Endothelial cell of umbilical vein (primary cell): ENCODE measurements at regions of chr17 and their contacts with region 1.

Region 1: DNA sequence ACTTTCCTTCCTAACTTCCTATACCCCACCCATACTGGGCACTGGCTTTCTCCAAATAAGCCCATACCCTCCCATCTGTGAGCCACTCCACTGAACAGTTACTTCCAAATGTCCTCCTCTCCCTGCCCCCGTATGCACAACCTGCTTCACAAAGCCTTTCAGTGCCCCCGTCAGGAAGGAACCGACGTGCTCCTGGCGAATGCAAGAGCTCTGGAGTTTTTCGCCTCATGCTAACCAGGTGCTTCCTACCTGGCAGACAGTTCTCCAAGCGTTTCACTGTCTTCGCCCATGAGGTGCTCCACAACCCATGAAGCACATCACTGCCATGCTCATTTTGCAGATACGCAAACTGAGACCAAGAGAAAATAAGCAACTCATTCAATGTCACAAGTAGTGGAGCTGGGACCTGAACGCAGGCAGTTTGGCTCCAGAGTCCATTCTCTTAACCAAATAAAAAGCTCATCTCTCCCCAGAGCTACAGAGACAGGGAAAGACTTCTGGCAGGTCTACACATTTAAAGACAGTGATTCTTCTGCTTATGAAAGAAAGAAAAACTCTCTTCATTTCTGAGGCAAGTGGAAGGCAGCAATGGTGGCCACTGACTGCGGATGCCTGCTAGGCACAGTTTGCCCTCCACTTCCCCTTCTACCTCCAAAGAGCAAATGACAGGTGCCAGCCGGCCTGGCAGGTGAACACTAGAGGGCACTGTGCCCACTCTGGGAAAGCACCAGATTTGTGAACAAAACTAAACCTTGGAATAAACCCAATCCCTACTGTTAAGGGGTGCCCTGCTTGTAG is 23.8 kb downstream of the SPHK1 start:
- DNase-seq: peak; percentile 66
- H3K4me3 ChIP-seq: no peak overlapping the region
- H3K27ac ChIP-seq: no peak overlapping the region
- H3K4me1 ChIP-seq: no peaks in the 10 kb centered on the region
- H3K27me3 ChIP-seq: no peaks in the 10 kb centered on the region
- CTCF ChIP-seq: peak; percentile 92
- POLR2A ChIP-seq: no peak

Region 2: DNA sequence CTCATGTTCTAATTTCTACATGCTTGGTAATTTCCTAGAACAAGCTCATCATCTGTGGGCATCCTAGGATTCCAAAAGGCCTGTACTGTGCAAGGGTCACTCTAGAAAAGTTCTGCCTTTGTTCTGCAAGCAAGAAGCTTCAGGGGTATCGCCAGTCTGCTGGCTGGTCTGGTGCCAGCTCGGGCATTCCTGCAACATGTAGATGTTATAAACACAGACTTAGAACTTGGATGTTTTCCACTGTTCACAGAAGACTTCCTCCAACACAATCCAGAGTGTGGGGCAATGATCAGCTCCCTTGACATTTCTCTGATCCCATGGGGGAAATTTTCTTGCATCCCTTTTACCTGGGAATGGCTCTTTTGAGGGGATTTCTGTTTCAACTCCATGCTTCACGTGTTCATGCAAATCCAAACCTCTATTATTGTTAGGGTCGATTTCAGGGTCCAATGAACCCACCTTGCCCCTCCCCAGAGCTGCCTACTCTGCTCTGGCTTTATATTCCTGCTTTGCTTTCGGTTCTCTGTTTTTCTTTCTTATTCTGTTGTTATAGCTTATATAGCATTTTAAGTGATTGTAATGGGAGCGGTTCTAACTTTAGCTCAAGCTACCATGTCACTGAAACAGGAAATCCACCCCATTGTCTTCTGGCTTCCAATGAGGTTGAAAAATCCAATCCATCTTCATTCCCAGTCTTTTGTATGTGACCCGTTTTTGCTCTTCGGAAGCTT is 19.4 kb after region 1 on chr17:
- CTCF ChIA-PET with region 1: interaction called, 15 read pairs
- POLR2A ChIA-PET with region 1: interaction called, 3 read pairs
- dilution Hi-C with region 1: no loop called
- intact Hi-C with region 1: no loop called
- DNase-seq: peak; percentile 84
- H3K4me3 ChIP-seq: peak overlapping the region in 1 of 3 experiments; percentile 28
- H3K27ac ChIP-seq: peak overlapping the region; percentile 45
- H3K4me1 ChIP-seq: peaks cover 22% of the 10 kb centered on the region
- H3K27me3 ChIP-seq: no peaks in the 10 kb centered on the region
- CTCF ChIP-seq: no peak
- POLR2A ChIP-seq: no peak

Region 3: GRCh38 chr17:76446449-76447231 is 38.4 kb after region 1 on chr17:
- CTCF ChIA-PET with region 1: interaction called, 319 read pairs
- POLR2A ChIA-PET with region 1: no interaction called
- dilution Hi-C with region 1: no loop called
- intact Hi-C with region 1: no loop called
- DNase-seq: peak; percentile 28
- H3K4me3 ChIP-seq: no peak overlapping the region
- H3K27ac ChIP-seq: no peak overlapping the region
- H3K4me1 ChIP-seq: peaks cover 47% of the 10 kb centered on the region
- H3K27me3 ChIP-seq: no peaks in the 10 kb centered on the region
- CTCF ChIP-seq: no peak
- POLR2A ChIP-seq: no peak

Region 4: GRCh38 chr17:76452660-76453430 is 44.6 kb after region 1 on chr17 and contains the start of gene UBE2O:
- CTCF ChIA-PET with region 1: interaction called, 319 read pairs
- POLR2A ChIA-PET with region 1: no interaction called
- dilution Hi-C with region 1: no loop called
- intact Hi-C with region 1: loop called (anchors 1 kb)
- DNase-seq: peak; percentile 84
- H3K4me3 ChIP-seq: peak within 1 kb of the TSS; percentile 66 to 96 (median 73)
- H3K27ac ChIP-seq: peak within 1 kb of the TSS; percentile 31
- H3K4me1 ChIP-seq: peaks cover 10% of the 10 kb centered on the region
- H3K27me3 ChIP-seq: no peaks in the 10 kb centered on the region
- CTCF ChIP-seq: peak; percentile 38 to 44
- POLR2A ChIP-seq: peak; percentile 35
- total RNA-seq, gene UBE2O: 32.8 and 34.1 TPM in 2 replicates

Region 5: DNA sequence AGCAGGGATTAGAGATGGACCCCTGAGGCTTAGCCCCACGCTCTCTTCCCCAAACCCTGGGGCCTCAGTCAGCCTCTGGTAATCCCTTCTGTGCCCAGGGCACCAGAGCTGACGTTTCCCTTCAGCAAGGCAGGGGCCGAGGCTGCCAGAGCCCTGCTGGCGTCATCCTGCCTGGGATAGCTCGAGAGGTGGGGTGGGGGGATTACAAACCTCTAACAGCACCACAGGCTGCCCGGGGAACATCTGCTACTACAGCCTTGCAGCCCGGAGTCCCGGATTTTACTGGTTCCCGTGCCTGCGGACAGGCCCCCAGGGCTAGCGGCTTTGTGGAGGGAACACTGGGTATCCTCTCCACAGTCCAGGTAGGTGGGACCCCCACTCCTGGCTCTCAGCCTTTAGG is 59.1 kb after region 1 on chr17 and contains the start of gene AANAT:
- CTCF ChIA-PET with region 1: interaction called, 12 read pairs
- POLR2A ChIA-PET with region 1: no interaction called
- dilution Hi-C with region 1: no loop called
- intact Hi-C with region 1: loop called (anchors 2 kb)
- DNase-seq: no peak
- H3K4me3 ChIP-seq: no peak within 1 kb of the TSS
- H3K27ac ChIP-seq: no peak within 1 kb of the TSS
- H3K4me1 ChIP-seq: no peaks in the 10 kb centered on the region
- H3K27me3 ChIP-seq: no peaks in the 10 kb centered on the region
- CTCF ChIP-seq: no peak
- POLR2A ChIP-seq: no peak
- total RNA-seq, gene AANAT: not detected in 2 replicates

Region 6: GRCh38 chr17:76506408-76507349 is 98.4 kb after region 1 on chr17:
- CTCF ChIA-PET with region 1: interaction called, 12 read pairs
- POLR2A ChIA-PET with region 1: no interaction called
- dilution Hi-C with region 1: no loop called
- intact Hi-C with region 1: loop called (anchors 1 kb)
- DNase-seq: peak; percentile 71
- H3K4me3 ChIP-seq: no peak overlapping the region
- H3K27ac ChIP-seq: no peak overlapping the region
- H3K4me1 ChIP-seq: no peaks in the 10 kb centered on the region
- H3K27me3 ChIP-seq: peaks cover 0 to 4% of the 10 kb centered on the region in 2 experiments
- CTCF ChIP-seq: peak; percentile 87 to 95
- POLR2A ChIP-seq: no peak